A673 (cell line): ENCODE measurements at regions of chr6 and their contacts with region 1.

Region 1: DNA sequence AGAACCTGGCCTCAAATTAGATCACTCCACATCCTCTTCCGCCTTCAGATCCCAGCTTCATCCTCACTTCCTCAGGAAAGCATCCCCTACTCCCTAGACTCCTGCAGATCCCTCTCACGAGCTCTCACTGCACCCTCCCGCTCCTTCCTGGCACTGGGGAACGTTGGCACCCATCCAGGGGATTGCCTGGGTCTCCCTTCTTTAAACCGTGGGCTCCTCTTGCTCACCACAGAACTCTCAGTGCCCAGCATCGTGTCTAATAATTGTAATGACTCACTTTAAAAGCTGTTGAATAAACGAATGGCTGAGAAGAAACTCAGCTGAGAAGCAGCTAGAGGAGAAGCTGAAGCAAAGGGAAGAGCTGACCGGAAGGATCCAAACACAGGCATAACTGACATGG is 20.4 kb downstream of the ZC3H12D start:
- DNase-seq: no peak
- H3K4me3 ChIP-seq: no peak overlapping the region
- H3K27ac ChIP-seq: no peak overlapping the region
- H3K4me1 ChIP-seq: no peaks in the 10 kb centered on the region
- H3K27me3 ChIP-seq: no peaks in the 10 kb centered on the region
- CTCF ChIP-seq: no peak

Region 2: DNA sequence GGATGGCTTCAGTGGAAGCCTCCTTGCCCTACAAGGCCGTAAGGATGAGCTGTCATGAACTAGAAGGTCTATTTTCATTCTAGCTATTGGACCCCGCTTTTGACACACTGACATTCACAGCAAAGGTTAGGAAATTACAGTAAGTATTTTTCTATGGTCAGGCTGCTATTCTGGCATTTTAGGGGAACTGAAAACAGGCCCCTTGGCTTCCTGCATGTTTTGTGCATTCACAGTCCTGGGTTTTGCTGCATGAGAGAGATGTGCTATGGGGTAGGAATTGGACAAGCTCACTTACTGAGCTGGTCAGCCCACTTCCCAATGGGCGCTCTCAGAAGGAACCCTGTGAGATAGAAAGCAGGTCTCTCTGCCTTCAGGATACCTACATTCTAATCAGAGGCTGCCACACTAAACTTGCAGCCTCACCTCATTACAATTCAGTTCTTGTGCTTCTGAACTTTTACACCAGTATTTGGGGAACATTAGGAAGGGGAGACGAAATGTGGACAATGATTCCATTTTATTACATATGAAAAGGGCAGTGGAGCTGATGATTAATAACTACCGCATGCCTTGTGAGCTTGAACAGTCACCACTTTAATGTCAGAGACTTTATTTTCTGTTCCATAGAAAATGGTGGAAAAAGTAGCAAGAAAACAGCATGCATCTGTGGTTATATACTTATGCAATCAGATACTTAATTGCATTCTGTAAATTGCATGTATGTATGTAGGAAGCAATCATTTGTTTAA is 233.5 kb before region 1 on chr6:
- CTCF ChIA-PET with region 1: no interaction called
- POLR2A ChIA-PET with region 1: interaction called, 10 read pairs
- intact Hi-C with region 1: no loop called
- DNase-seq: no peak
- H3K4me3 ChIP-seq: no peak overlapping the region
- H3K27ac ChIP-seq: no peak overlapping the region
- H3K4me1 ChIP-seq: no peaks in the 10 kb centered on the region
- H3K27me3 ChIP-seq: no peaks in the 10 kb centered on the region
- CTCF ChIP-seq: no peak

Region 3: DNA sequence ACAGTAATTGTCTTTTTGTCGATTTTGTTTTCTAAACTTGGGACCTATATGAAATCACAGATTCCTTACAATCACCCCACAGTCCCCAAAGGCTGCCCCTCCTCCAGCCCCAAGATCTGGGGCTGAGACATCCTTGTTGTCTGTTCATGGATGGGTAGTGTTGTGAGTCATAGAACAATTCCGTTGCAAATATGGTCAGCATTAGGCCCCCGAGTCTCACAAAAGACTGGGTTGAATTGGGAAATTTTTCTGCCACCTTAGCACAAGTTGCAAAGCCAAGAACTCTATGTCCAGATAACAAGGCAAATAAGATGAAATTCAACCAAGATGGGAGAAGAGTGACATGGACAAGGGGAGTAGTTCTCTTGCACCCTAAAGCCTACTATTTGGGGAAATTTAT is 157.4 kb before region 1 on chr6:
- CTCF ChIA-PET with region 1: no interaction called
- POLR2A ChIA-PET with region 1: no interaction called
- intact Hi-C with region 1: no loop called
- DNase-seq: no peak
- H3K4me3 ChIP-seq: no peak overlapping the region
- H3K27ac ChIP-seq: no peak overlapping the region
- H3K4me1 ChIP-seq: no peaks in the 10 kb centered on the region
- H3K27me3 ChIP-seq: no peaks in the 10 kb centered on the region
- CTCF ChIP-seq: no peak